Caco-2 (cell line): ENCODE measurements at regions of chr2 and their contacts with region 1.

Region 1: DNA sequence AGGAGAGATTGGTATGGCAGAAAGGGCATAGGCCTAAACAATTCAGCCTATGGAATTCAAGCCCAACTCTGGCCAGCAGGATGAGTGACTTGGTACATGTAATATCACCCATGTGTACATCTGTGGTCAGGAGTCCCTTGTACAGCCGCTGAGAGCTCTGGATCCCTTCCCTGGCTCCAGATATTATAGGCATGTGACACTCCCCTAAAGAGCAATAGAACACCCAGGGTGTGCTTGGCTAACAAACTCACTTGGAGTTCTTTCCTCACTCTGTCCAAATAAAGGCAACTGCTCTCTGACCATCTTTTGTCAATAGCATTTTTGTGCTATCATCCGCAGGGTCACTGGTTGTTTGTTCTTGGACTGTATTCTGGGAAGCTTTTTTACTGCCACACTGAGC is 197.4 kb upstream of the NCKAP5 start:
- DNase-seq: peak; percentile 79 to 85
- H3K4me3 ChIP-seq: no peak overlapping the region
- H3K4me3 Mint-ChIP-seq: no peak overlapping the region
- H3K27ac Mint-ChIP-seq: peak overlapping the region; percentile 79
- H3K4me1 ChIP-seq: peaks cover 27% of the 10 kb centered on the region
- H3K4me1 Mint-ChIP-seq: peaks cover 26% of the 10 kb centered on the region
- H3K27me3 ChIP-seq: no peaks in the 10 kb centered on the region
- H3K27me3 Mint-ChIP-seq: no peaks in the 10 kb centered on the region
- CTCF ChIP-seq: no peak

Region 2: GRCh38 chr2:133421516-133422312 is 343.9 kb before region 1 on chr2:
- CTCF ChIA-PET with region 1: no interaction called
- POLR2A ChIA-PET with region 1: no interaction called
- intact Hi-C with region 1: loop called (anchors 5 kb)
- DNase-seq: peak; percentile 52 to 63
- H3K4me3 ChIP-seq: no peak overlapping the region
- H3K4me3 Mint-ChIP-seq: peak overlapping the region; percentile 60
- H3K27ac Mint-ChIP-seq: peak overlapping the region; percentile 36
- H3K4me1 ChIP-seq: peaks cover 26% of the 10 kb centered on the region
- H3K4me1 Mint-ChIP-seq: peaks cover 27% of the 10 kb centered on the region
- H3K27me3 ChIP-seq: no peaks in the 10 kb centered on the region
- H3K27me3 Mint-ChIP-seq: no peaks in the 10 kb centered on the region
- CTCF ChIP-seq: no peak

Region 3: GRCh38 chr2:133658020-133658903 is 107.4 kb before region 1 on chr2:
- CTCF ChIA-PET with region 1: no interaction called
- POLR2A ChIA-PET with region 1: no interaction called
- intact Hi-C with region 1: loop called (anchors 5 kb)
- DNase-seq: no peak
- H3K4me3 ChIP-seq: no peak overlapping the region
- H3K4me3 Mint-ChIP-seq: no peak overlapping the region
- H3K27ac Mint-ChIP-seq: no peak overlapping the region
- H3K4me1 ChIP-seq: peaks cover 11% of the 10 kb centered on the region
- H3K4me1 Mint-ChIP-seq: peaks cover 15% of the 10 kb centered on the region
- H3K27me3 ChIP-seq: no peaks in the 10 kb centered on the region
- H3K27me3 Mint-ChIP-seq: peaks cover under 1% of the 10 kb centered on the region
- CTCF ChIP-seq: no peak